Calu3 (cell line): ENCODE measurements at regions of chr5 and their contacts with region 1.

Region 1: DNA sequence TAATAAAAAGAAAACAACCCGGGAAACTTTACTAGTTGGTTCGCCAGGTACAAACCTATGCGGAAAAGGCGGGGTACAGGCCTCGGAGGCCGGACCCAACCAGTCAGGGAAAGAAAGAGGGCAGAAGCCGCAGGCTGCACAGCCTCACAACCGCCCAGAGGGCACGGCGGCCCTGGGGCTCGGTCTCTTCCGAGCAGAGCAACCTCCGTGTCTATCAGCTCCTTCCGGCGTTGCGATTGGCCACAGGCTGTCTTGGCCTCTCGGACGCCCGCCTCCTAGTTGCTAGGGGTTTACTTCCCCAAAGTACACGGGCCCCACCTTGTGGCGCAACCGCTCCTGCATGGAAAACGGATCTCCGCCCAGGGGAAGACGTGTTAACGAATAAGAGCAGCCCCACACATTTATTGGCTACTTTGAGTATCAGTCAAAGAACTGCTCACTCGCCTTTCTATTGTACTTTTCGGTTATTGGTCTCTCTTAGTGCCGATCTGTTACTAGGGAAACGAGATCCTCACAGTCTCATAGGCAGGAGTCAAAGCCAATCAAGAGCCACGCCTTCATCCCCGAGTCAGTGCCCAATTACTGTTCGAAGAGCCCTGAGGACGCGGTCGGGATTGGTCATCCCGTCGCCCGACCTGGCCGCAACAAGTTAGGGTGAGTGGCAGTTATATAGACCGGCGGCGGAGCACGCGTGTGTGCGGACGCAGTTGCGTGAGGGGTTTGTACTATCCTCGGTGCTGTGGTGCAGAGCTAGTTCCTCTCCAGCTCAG is at the start of gene G3BP1:
- DNase-seq: peak; percentile 100
- H3K4me3 Mint-ChIP-seq: no peak within 1 kb of the TSS
- H3K27ac Mint-ChIP-seq: no peak within 1 kb of the TSS
- H3K4me1 Mint-ChIP-seq: peaks cover 15% of the 10 kb centered on the region
- H3K27me3 Mint-ChIP-seq: no peaks in the 10 kb centered on the region
- CTCF ChIP-seq: peak; percentile 32
- total RNA-seq, gene G3BP1: 356 and 393 TPM in 2 replicates

Region 2: GRCh38 chr5:150486402-150487198 is 1284.8 kb before region 1 on chr5:
- CTCF ChIA-PET with region 1: no interaction called
- intact Hi-C with region 1: no loop called
- DNase-seq: peak; percentile 89
- H3K4me3 Mint-ChIP-seq: peak overlapping the region; percentile 61
- H3K27ac Mint-ChIP-seq: peak overlapping the region; percentile 32
- H3K4me1 Mint-ChIP-seq: peaks cover 48% of the 10 kb centered on the region
- H3K27me3 Mint-ChIP-seq: no peaks in the 10 kb centered on the region
- CTCF ChIP-seq: no peak

Region 3: GRCh38 chr5:151659001-151659754 is 112.3 kb before region 1 on chr5:
- CTCF ChIA-PET with region 1: interaction called, 47 read pairs
- intact Hi-C with region 1: loop called (anchors 1 kb)
- DNase-seq: peak; percentile 93
- H3K4me3 Mint-ChIP-seq: no peak overlapping the region
- H3K27ac Mint-ChIP-seq: no peak overlapping the region
- H3K4me1 Mint-ChIP-seq: peaks cover 17% of the 10 kb centered on the region
- H3K27me3 Mint-ChIP-seq: peaks cover 22% of the 10 kb centered on the region
- CTCF ChIP-seq: peak; percentile 90